GM12878 (cell line): ENCODE measurements at regions of chr20 and their contacts with region 1.

Region 1: DNA sequence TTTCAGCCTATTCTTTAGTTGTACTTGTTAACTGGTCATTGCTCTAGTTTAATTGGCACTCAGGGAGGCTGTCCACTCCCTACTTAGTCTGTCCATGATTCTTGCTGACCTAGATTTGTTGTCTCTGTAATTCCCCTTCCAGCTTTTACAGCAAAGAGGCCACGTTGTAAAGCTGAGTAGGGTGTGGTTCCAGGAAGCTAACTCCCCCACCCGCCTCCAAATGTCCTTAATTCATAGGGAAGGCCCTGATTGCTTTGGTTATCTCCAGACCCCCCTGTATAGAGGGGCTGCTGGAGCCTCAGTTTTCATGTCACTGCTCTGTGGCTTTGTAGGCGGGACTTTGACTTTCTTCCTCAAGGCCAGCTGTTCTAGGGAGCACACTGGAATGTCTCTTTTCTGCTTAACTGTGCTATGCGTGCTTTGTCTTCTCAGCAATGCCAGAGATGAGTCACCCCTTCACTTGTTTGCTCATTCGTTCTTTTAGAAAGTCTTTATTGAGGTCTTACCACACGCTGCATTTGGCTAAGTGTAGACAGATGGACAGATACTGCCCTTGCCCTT is 175.1 kb upstream of the JAG1 start:
- DNase-seq: peak; percentile 11
- ATAC-seq: peak; percentile 82
- H3K4me3 ChIP-seq: no peak overlapping the region
- H3K27ac ChIP-seq: no peak overlapping the region
- H3K4me1 ChIP-seq: no peaks in the 10 kb centered on the region
- H3K27me3 ChIP-seq: no peaks in the 10 kb centered on the region
- CTCF ChIP-seq: no peak
- EP300 ChIP-seq: no peak
- POLR2A ChIP-seq: no peak
- RAD21 ChIP-seq: no peak

Region 2: GRCh38 chr20:10802236-10802635 is 46.7 kb before region 1 on chr20:
- CTCF ChIA-PET with region 1: no interaction called
- POLR2A ChIA-PET with region 1: no interaction called
- RAD21 ChIA-PET with region 1: no interaction called
- SMC1A ChIA-PET with region 1: no interaction called
- in situ Hi-C with region 1: no loop called
- intact Hi-C with region 1: no loop called
- DNase-seq: no peak
- ATAC-seq: no peak
- H3K4me3 ChIP-seq: no peak overlapping the region
- H3K27ac ChIP-seq: no peak overlapping the region
- H3K4me1 ChIP-seq: no peaks in the 10 kb centered on the region
- H3K27me3 ChIP-seq: no peaks in the 10 kb centered on the region
- CTCF ChIP-seq: no peak
- EP300 ChIP-seq: no peak
- POLR2A ChIP-seq: no peak
- RAD21 ChIP-seq: no peak

Region 3: GRCh38 chr20:10902576-10903282 is 53.8 kb after region 1 on chr20:
- CTCF ChIA-PET with region 1: no interaction called
- POLR2A ChIA-PET with region 1: no interaction called
- RAD21 ChIA-PET with region 1: no interaction called
- SMC1A ChIA-PET with region 1: no interaction called
- in situ Hi-C with region 1: no loop called
- intact Hi-C with region 1: loop called (anchors 10 kb)
- DNase-seq: no peak
- ATAC-seq: no peak
- H3K4me3 ChIP-seq: no peak overlapping the region
- H3K27ac ChIP-seq: no peak overlapping the region
- H3K4me1 ChIP-seq: no peaks in the 10 kb centered on the region
- H3K27me3 ChIP-seq: no peaks in the 10 kb centered on the region
- CTCF ChIP-seq: no peak
- EP300 ChIP-seq: no peak
- POLR2A ChIP-seq: no peak
- RAD21 ChIP-seq: no peak